ENCODE measurements at regions of chr6 and their contacts with region 1.

Region 1: GRCh38 chr6:3068329-3069214 is at the start of gene RIPK1:
- DNase-seq: peak; percentile 94
- H3K4me3 Mint-ChIP-seq: peak within 1 kb of the TSS; percentile 98
- H3K27ac Mint-ChIP-seq: peak within 1 kb of the TSS; percentile 99
- H3K4me1 Mint-ChIP-seq: peaks cover 70% of the 10 kb centered on the region
- H3K27me3 Mint-ChIP-seq: no peaks in the 10 kb centered on the region
- total RNA-seq, gene RIPK1: 35.8 to 38.9 TPM

Region 2: DNA sequence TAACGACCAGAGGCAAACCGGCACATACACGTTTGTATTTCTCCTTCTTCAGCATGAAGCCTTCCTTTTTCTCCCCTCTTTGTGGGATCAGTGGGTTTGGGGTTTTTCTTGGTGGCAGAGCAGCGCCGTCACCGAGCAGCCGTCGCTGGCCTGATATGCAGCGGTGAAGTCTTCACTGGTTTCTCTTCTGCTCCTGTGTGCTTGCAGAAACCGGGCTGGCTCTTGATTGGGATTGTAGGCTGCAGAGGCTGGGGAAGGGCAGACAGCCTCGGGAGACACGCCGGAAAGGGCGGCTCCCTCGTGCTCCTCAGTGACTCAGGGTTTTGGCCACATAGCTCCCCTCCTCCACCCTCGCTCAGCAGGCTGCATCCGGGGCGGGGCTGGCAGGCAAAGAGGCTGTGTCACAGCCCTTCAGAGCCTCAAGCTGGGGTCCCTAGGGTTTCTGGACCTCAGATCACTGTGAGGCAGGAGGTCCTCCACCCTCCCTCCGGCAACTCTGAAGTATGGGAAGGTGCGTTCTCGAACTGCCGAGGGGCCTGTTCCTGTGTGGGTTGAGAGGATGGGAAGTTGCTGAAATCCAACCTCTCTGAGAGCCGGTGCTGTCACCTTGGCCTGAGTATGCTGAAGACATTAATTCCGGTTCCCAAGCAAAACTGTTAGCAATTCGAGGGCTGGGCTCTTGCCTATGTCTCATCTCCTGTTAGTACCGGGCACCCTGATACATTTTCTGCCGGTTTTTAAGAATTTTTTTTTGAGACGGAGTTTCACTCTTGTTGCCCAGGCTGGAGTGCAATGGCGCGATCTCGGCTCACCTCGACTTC is 44.7 kb before region 1 on chr6:
- CTCF ChIA-PET with region 1: interaction called, 5 read pairs
- POLR2A ChIA-PET with region 1: interaction called, 10 read pairs
- DNase-seq: peak; percentile 90
- H3K4me3 Mint-ChIP-seq: peak overlapping the region; percentile 73
- H3K27ac Mint-ChIP-seq: peak overlapping the region; percentile 97
- H3K4me1 Mint-ChIP-seq: peaks cover 59% of the 10 kb centered on the region
- H3K27me3 Mint-ChIP-seq: no peaks in the 10 kb centered on the region

Measured in activated CD4-positive, alpha-beta T cell treated with anti-CD3 and anti-CD28 coated beads, Interleukin-2, amount 10 ng/mL, durations not matched to agents 7 days and 5 days (primary cell).